ENCODE measurements at regions of chr2 and their contacts with region 1.

Region 1: GRCh38 chr2:199739413-199740110 is 111.4 kb downstream of the FTCDNL1 start:
- DNase-seq: peak; percentile 71
- H3K4me3 Mint-ChIP-seq: no peak overlapping the region
- H3K27ac Mint-ChIP-seq: no peak overlapping the region
- H3K4me1 Mint-ChIP-seq: peaks cover 6% of the 10 kb centered on the region
- H3K27me3 Mint-ChIP-seq: peaks cover 14% of the 10 kb centered on the region

Region 2: GRCh38 chr2:198309673-198310280 is 1429.8 kb before region 1 on chr2:
- CTCF ChIA-PET with region 1: interaction called, 12 read pairs
- intact Hi-C with region 1: loop called (anchors 2 kb)
- DNase-seq: peak; percentile 78
- H3K4me3 Mint-ChIP-seq: no peak overlapping the region
- H3K27ac Mint-ChIP-seq: no peak overlapping the region
- H3K4me1 Mint-ChIP-seq: no peaks in the 10 kb centered on the region
- H3K27me3 Mint-ChIP-seq: peaks cover 23% of the 10 kb centered on the region

Region 3: GRCh38 chr2:199471443-199472057 is 268.0 kb before region 1 on chr2:
- CTCF ChIA-PET with region 1: no interaction called
- intact Hi-C with region 1: loop called (anchors 5 kb)
- DNase-seq: peak; percentile 44
- H3K4me3 Mint-ChIP-seq: no peak overlapping the region
- H3K27ac Mint-ChIP-seq: no peak overlapping the region
- H3K4me1 Mint-ChIP-seq: peaks cover 25% of the 10 kb centered on the region
- H3K27me3 Mint-ChIP-seq: peaks cover 78% of the 10 kb centered on the region

Region 4: GRCh38 chr2:199602271-199602895 is 137.2 kb before region 1 on chr2:
- CTCF ChIA-PET with region 1: interaction called, 5 read pairs
- intact Hi-C with region 1: loop called (anchors 5 kb)
- DNase-seq: peak; percentile 10
- H3K4me3 Mint-ChIP-seq: no peak overlapping the region
- H3K27ac Mint-ChIP-seq: no peak overlapping the region
- H3K4me1 Mint-ChIP-seq: peaks cover 4% of the 10 kb centered on the region
- H3K27me3 Mint-ChIP-seq: peaks cover 11% of the 10 kb centered on the region

Region 5: DNA sequence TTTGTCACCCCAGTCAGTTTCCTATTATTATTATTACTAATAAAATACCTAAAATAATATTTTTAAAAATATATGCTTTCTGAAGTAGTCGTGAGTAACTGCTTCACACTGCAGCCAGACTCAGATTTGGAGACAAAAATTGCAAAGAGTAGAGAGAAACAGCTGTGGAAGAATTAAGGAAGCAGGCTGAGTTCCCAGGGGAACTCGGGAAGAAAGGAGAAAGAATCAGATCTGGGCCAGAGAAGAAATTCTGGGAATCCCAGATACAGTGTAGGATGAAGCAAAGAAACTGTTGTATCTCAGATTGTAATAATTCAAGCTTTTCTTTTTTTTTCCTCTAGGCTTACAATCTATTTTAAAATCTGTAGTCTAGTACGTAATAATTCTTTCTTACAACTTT is 70.9 kb before region 1 on chr2:
- CTCF ChIA-PET with region 1: no interaction called
- intact Hi-C with region 1: no loop called
- DNase-seq: no peak
- H3K4me3 Mint-ChIP-seq: no peak overlapping the region
- H3K27ac Mint-ChIP-seq: no peak overlapping the region
- H3K4me1 Mint-ChIP-seq: no peaks in the 10 kb centered on the region
- H3K27me3 Mint-ChIP-seq: peaks cover 13% of the 10 kb centered on the region

Region 6: DNA sequence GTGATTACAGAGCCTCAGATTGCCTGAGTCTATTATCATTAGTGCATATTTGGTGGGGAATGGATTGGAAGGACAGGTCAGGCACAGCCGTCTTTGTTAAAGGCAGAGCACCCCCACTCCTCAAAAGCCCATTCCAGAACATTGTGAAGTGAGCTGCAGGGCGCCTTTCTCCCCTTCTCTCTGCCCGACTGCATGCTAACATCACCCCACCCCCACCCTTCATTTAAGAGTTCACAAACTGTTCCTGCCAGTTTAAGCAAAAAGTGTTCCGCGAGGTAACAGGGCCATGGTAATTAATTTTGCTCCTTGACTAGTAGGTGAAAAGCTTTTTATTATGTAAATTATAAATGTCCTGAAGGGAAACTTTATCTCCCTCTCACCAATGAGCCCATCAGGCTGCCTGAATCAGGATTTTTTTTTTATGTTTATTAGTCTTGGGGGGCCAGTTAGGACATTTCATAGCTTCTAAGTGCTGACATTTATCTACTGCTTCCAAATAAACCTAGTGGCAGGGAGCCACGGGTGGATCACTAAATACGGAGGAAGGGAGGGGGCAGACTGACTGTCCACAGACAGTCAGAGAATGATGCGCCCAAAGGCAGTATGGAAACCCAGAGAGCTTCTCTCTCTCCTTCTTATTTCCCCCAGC is 12.0 kb after region 1 on chr2:
- CTCF ChIA-PET with region 1: interaction called, 23 read pairs
- intact Hi-C with region 1: no loop called
- DNase-seq: no peak
- H3K4me3 Mint-ChIP-seq: no peak overlapping the region
- H3K27ac Mint-ChIP-seq: no peak overlapping the region
- H3K4me1 Mint-ChIP-seq: no peaks in the 10 kb centered on the region
- H3K27me3 Mint-ChIP-seq: peaks cover 3% of the 10 kb centered on the region

Region 7: GRCh38 chr2:200670313-200670712 is 930.8 kb after region 1 on chr2:
- CTCF ChIA-PET with region 1: no interaction called
- intact Hi-C with region 1: no loop called
- DNase-seq: no peak
- H3K4me3 Mint-ChIP-seq: no peak overlapping the region
- H3K27ac Mint-ChIP-seq: no peak overlapping the region
- H3K4me1 Mint-ChIP-seq: peaks cover 11% of the 10 kb centered on the region
- H3K27me3 Mint-ChIP-seq: no peaks in the 10 kb centered on the region